Aorta (tissue), 5 donors: ENCODE measurements at regions of chr2 and their contacts with region 1.

Region 1: DNA sequence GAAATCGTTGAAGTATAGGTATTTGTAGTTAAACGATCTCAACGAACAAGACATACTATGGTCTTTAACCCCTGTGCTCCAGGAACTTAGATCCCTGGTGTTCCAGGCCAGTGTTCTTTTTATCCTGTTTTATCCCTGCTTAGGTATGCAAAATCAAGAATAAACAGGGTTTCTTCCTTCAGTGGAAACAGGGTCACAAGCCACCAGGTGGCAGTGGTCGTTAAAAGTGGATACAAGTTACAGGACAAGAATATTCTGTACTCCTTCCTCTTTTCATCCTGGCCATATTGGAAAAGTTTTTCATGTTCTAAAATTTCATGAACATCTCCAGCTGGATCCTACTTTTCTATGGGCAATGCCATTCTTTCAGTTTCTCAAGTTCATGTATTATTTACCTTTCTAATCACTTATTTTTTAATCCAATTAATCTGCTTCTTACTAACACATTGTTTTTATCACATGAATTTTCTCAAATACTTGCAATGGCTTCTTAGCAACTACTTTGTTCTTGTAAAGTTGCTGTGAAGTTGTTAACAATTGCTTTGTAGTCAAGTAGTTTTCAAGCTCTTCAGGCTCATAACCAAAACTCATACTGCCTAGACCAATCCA is 16.4 kb upstream of the HNMT start:
- DNase-seq: peak; percentile 86 to 90
- ATAC-seq: peak; percentile 67
- H3K4me3 ChIP-seq: no peak overlapping the region
- H3K27ac ChIP-seq: no peak overlapping the region
- H3K4me1 ChIP-seq: peaks cover 0 to 3% of the 10 kb centered on the region in 2 donors
- H3K27me3 ChIP-seq: no peaks in the 10 kb centered on the region

Region 2: DNA sequence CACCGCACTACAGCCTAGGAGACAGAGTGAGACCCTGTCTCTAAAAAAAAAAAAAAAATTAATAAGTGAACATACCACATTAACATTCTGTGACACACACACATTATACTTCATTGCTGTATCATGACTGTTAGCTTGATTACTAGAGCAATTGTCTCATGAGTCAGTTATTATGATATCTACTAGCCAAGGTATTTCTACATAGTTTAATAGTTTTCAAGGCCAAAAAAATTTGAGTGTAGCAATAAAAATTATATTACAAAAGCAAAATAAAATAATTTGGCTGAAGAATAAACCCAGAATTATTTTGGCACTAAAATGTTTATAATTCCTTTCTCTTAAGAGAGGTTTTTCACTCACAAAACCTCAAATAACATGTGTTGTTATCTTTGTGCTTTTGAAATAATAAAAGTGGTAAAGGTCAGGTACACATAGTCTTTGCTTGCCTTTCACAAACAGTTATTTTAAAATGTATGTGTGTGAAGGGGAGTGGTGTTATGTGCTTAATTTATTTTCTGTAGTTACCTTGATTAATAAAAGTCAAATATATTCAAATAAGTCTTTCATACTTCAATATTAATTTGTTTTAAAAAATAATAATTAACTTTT is 416.8 kb after region 1 on chr2:
- intact Hi-C with region 1: loop called in 1 of 2 experiments (anchors 10 kb)
- DNase-seq: no peak
- ATAC-seq: no peak
- H3K4me3 ChIP-seq: no peak overlapping the region
- H3K27ac ChIP-seq: peak overlapping the region in 1 of 2 donors; percentile 54
- H3K4me1 ChIP-seq: peaks cover 4 to 8% of the 10 kb centered on the region in 2 donors
- H3K27me3 ChIP-seq: no peaks in the 10 kb centered on the region